ENCODE measurements at regions of chr16 and their contacts with region 1.

Region 1: DNA sequence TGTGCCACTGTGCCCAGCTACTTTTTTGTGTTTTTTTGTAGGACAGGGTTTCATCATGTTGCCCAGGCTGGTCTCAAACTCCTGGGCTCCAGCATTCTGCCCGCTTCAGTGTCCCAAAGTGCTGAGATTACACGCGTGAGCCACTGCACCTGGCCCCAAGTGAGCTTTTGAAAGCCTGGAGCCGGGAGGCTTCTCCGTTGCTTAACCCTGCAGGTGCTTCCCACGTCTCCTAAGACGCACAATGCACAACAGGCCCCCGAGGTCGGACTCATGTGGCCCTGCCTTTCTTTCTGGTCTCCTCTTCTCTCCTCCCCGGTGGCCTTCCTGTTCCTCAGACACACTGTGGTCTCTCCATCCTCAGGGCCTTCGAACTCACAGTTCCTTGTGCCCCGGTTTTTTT is 12.5 kb downstream of the RABEP2 start:
- H3K4me3 ChIP-seq: no peak overlapping the region
- H3K27ac ChIP-seq: no peak overlapping the region
- H3K4me1 ChIP-seq: no peaks in the 10 kb centered on the region
- CTCF ChIP-seq: no peak

Region 2: GRCh38 chr16:28924732-28925385 is 12.3 kb after region 1 on chr16 and contains the start of gene RABEP2:
- CTCF ChIA-PET with region 1: no interaction called
- POLR2A ChIA-PET with region 1: interaction called, 10 read pairs
- H3K4me3 ChIP-seq: peak within 1 kb of the TSS; percentile 91
- H3K27ac ChIP-seq: peak within 1 kb of the TSS; percentile 95
- H3K4me1 ChIP-seq: 0 out of 2 replicates have a peak, but pooled peaks cover 4% of the 10 kb centered on the region
- CTCF ChIP-seq: no peak

Region 3: GRCh38 chr16:28958836-28959235 is 46.3 kb after region 1 on chr16:
- CTCF ChIA-PET with region 1: no interaction called
- POLR2A ChIA-PET with region 1: no interaction called
- H3K4me3 ChIP-seq: no peak overlapping the region
- H3K27ac ChIP-seq: no peak overlapping the region
- H3K4me1 ChIP-seq: no peaks in the 10 kb centered on the region
- CTCF ChIP-seq: no peak

Measured in HEK293 (cell line).